Heart left ventricle (tissue), 16 donors: ENCODE measurements at regions of chr7 and their contacts with region 1.

Region 1: GRCh38 chr7:150753826-150754603 is 16.8 kb downstream of the GIMAP5 start:
- DNase-seq: no peak
- ATAC-seq: peak; percentile 26 to 60 (median 41)
- H3K4me3 ChIP-seq: no peak overlapping the region
- H3K27ac ChIP-seq: peak overlapping the region in 9 of 12 donors; percentile 24 to 90 (median 81)
- H3K4me1 ChIP-seq: peaks cover 0 to 61% (median 41%) of the 10 kb centered on the region in 12 donors
- H3K27me3 ChIP-seq: no peaks in the 10 kb centered on the region
- CTCF ChIP-seq: peak in 9 of 12 donors; percentile 23 to 57 (median 44)
- POLR2A ChIP-seq: no peak

Region 2: GRCh38 chr7:150481186-150481920 is 272.7 kb before region 1 on chr7:
- intact Hi-C with region 1: no loop called
- DNase-seq: peak in 1 of 5 donors; percentile 51
- ATAC-seq: peak in 3 of 4 donors; percentile 11 to 35 (median 25)
- H3K4me3 ChIP-seq: peak overlapping the region in 1 of 12 donors; percentile 2
- H3K27ac ChIP-seq: peak overlapping the region; percentile 1 to 96 (median 72)
- H3K4me1 ChIP-seq: peaks cover 2 to 95% (median 24%) of the 10 kb centered on the region in 12 donors
- H3K27me3 ChIP-seq: no peaks in the 10 kb centered on the region
- CTCF ChIP-seq: no peak
- POLR2A ChIP-seq: no peak

Region 3: DNA sequence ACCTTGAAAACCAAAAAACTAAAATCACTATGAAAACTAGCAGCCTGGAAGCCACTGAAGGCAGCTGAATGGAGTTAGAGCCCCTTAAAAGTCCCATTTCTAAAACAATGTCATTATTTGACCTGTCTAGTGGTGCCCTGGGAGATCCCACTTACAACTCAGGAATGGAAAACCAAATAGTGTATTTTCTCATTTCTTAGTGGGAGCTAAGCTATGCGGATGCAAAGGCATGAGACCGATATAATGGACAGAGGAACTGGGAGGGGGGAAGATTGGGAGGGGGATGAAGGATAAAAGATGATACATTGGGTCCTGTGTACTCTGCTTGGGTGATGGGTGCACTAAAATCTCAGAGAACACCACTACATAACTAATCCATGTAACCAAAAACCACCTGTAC is 78.3 kb before region 1 on chr7:
- intact Hi-C with region 1: no loop called
- DNase-seq: no peak
- ATAC-seq: no peak
- H3K4me3 ChIP-seq: peak overlapping the region in 2 of 12 donors; percentile 5 to 34
- H3K27ac ChIP-seq: peak overlapping the region; percentile 53 to 94 (median 70)
- H3K4me1 ChIP-seq: peaks cover 0 to 40% (median 7%) of the 10 kb centered on the region in 12 donors
- H3K27me3 ChIP-seq: no peaks in the 10 kb centered on the region
- CTCF ChIP-seq: no peak
- POLR2A ChIP-seq: no peak

Region 4: GRCh38 chr7:150737265-150738055 is 16.6 kb before region 1 on chr7 and contains the start of gene GIMAP5:
- intact Hi-C with region 1: loop called in 2 of 10 experiments (anchors 2 kb)
- DNase-seq: peak in 2 of 5 donors; percentile 43 to 55
- ATAC-seq: peak; percentile 66 to 83 (median 73)
- H3K4me3 ChIP-seq: peak within 1 kb of the TSS; percentile 43 to 78 (median 62)
- H3K27ac ChIP-seq: peak within 1 kb of the TSS; percentile 71 to 96 (median 86)
- H3K4me1 ChIP-seq: peaks cover 0 to 54% (median 15%) of the 10 kb centered on the region in 12 donors
- H3K27me3 ChIP-seq: no peaks in the 10 kb centered on the region
- CTCF ChIP-seq: no peak
- POLR2A ChIP-seq: peak in 1 of 2 donors; percentile 54
- total RNA-seq, gene GIMAP5: 6.4 to 40.4 (median 12.2) TPM

Region 5: GRCh38 chr7:150799741-150800580 is 45.9 kb after region 1 on chr7 and contains the start of gene TMEM176B:
- intact Hi-C with region 1: no loop called
- DNase-seq: peak; percentile 67 to 84 (median 74)
- ATAC-seq: peak; percentile 68 to 90 (median 84)
- H3K4me3 ChIP-seq: peak within 1 kb of the TSS; percentile 37 to 91 (median 67)
- H3K27ac ChIP-seq: peak within 1 kb of the TSS in 11 of 12 donors; percentile 8 to 83 (median 63)
- H3K4me1 ChIP-seq: peaks cover 0 to 45% (median 11%) of the 10 kb centered on the region in 12 donors
- H3K27me3 ChIP-seq: peaks cover 0 to 36% (median 8%) of the 10 kb centered on the region in 9 donors
- CTCF ChIP-seq: no peak
- POLR2A ChIP-seq: no peak
- total RNA-seq, gene TMEM176B: 25.1 to 137 (median 84.4) TPM